Calu3 (cell line): ENCODE measurements at regions of chr1 and their contacts with region 1.

Region 1: DNA sequence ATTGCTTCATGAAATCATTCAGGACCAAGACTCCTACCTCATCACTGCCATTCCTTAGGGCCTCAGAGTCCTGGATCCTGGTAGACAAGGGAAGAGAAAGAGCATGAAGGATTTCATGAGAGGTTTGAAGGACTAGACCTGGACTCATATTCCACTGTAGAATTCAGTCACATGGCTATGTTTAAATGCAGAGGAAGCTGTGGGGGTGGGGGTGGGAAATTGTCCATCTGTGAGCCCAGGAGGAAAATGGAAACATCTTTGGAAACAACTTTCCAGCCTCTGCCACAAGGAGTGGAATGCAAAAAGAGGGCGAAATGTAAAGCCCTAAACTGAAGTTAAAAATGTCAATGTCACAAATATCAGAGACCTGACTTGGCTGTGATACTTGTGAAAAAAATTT is 73.0 kb downstream of the BRINP2 start:
- DNase-seq: no peak
- H3K4me3 Mint-ChIP-seq: no peak overlapping the region
- H3K27ac Mint-ChIP-seq: no peak overlapping the region
- H3K4me1 Mint-ChIP-seq: peaks cover 9% of the 10 kb centered on the region
- H3K27me3 Mint-ChIP-seq: peaks cover 45% of the 10 kb centered on the region
- CTCF ChIP-seq: no peak

Region 2: DNA sequence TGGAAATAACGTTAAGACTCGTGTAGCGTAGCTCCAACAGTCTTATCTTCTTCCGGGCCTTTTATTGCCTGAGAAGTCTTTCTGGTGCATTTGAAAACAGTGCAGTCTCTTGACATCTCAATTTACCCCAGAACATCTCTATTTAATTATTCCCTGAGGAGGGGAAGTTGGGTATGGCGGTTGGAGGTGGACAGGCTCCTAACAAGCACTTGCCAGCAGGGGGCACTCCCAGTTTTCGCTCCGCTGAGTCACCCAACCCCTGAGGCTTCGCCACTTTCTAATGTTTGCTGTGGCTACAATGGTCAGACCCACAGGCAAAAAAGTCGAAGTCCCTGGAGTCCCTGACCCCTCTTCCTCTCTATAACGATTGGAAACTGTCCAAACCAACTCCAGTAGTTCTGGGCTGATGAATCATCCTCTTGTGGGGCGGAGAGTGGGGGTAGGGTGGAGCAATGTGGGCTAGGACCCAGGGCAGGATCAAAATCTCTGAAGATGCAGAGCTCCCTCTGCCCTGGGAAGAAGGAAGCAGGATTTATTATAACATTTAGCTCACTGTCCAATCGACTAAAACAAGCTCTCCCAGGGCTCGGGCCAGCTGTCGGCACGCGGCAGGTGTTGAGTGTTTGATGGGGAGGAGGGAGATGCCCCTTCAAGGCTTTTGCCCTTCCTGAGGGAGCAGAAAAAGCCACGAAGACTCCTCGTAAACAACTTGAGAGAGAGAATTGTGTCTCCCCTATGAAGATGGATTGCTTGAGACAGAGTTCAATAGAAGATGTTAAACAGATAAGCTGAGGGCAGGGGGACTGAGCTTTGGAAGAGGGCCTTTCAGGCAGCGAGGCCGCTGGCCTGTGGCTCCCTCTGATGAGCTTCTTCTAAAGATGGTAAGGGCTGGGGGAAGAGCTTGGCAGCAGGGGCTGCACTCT is 12.6 kb after region 1 on chr1:
- CTCF ChIA-PET with region 1: no interaction called
- intact Hi-C with region 1: no loop called
- DNase-seq: peak; percentile 92
- H3K4me3 Mint-ChIP-seq: peak overlapping the region; percentile 28
- H3K27ac Mint-ChIP-seq: peak overlapping the region; percentile 45
- H3K4me1 Mint-ChIP-seq: peaks cover 34% of the 10 kb centered on the region
- H3K27me3 Mint-ChIP-seq: no peaks in the 10 kb centered on the region
- CTCF ChIP-seq: peak; percentile 92

Region 3: DNA sequence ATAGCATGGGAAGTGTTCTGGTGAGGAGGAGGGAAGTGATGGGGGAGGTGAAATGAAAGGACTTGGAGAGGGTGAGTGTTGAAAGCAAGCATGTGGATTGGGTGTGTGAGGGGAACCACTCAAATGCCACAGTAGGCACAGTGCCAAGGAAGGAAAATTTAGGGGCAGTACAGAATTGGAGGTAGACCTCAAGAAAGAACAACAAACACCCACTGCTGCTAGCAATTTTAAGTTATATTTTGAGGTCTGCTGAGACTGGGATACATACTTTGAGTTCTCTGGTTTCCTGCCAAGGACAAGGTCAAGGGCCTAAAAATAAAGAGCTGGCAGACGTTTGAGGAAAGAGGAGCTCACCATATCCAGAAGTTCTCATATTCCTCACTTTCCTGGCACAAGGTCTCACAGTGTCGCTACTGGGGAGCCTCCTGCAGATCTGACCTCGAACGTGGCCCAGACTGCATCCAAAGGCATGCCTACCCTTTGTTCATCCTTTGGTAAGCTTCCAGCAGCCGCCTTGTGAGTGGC is 31.0 kb after region 1 on chr1:
- CTCF ChIA-PET with region 1: interaction called, 3 read pairs
- intact Hi-C with region 1: loop called (anchors 1 kb)
- DNase-seq: peak; percentile 22
- H3K4me3 Mint-ChIP-seq: peak overlapping the region; percentile 21
- H3K27ac Mint-ChIP-seq: peak overlapping the region; percentile 25
- H3K4me1 Mint-ChIP-seq: peaks cover 34% of the 10 kb centered on the region
- H3K27me3 Mint-ChIP-seq: peaks cover 36% of the 10 kb centered on the region
- CTCF ChIP-seq: no peak